ENCODE measurements at regions of chr11 and their contacts with region 1.

Region 1: GRCh38 chr11:33687733-33688479 is 12.7 kb downstream of the C11orf91 start:
- DNase-seq: peak in 1 of 2 donors; percentile 70
- ATAC-seq: no peak
- H3K4me3 ChIP-seq: no peak overlapping the region
- H3K27ac ChIP-seq: peak overlapping the region in 2 of 10 donors; percentile 84 to 94
- H3K4me1 ChIP-seq: peaks cover 16 to 52% (median 38%) of the 10 kb centered on the region in 9 donors
- H3K27me3 ChIP-seq: no peaks in the 10 kb centered on the region
- CTCF ChIP-seq: peak; percentile 66 to 85 (median 76)

Region 2: DNA sequence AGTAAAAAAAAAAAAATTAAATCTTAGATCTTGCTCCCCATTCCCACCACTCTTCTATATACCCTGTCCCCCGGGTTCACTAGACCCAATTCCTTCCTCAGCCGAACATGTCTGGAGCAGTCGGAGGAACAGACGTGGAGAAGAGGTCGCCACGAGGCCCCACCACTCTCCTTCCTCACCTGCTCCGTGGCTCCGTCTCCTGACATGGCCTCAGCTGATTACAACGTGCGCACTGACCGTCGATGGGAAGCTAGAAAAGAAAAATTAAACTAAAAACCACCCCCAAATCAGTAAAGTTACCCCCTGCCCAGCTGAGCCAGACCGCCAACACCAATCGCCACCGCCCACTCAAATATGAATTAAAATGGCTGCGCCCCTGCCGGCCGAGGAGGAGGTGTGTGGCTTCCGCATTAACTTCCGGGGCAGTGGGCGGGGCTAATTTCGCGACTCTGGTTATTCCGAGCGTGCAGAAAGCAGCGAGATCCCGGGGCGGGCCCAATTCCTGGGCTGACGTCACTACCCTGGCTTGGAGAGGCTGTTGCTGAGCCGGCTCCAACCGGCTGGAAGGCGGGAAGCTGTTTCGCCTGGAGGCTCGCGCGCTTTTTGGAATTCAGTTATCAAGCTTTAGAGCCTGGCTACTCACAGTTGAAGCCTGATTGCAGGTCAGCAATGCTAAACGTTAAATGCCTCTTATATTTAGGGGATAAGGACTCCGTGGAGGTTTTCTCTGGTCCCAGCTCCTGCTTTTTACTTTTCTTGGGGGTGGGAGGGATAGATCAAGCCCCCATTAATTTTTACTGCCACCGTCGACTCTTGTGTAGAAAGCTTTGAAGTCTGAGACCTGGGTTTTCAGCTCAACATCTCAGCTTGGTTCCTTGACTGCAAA is 526.5 kb before region 1 on chr11 and contains the start of gene CSTF3:
- intact Hi-C with region 1: loop called in 9 of 10 experiments (anchors 5 to 10 kb)
- DNase-seq: peak; percentile 100
- ATAC-seq: peak; percentile 98 to 100 (median 100)
- H3K4me3 ChIP-seq: peak within 1 kb of the TSS; percentile 42 to 83 (median 74)
- H3K27ac ChIP-seq: peak within 1 kb of the TSS in 9 of 10 donors; percentile 34 to 89 (median 78)
- H3K4me1 ChIP-seq: peaks cover 0 to 48% (median 36%) of the 10 kb centered on the region in 9 donors
- H3K27me3 ChIP-seq: no peaks in the 10 kb centered on the region
- CTCF ChIP-seq: peak; percentile 48 to 71 (median 62)
- total RNA-seq, gene CSTF3: 8.6 to 16.0 (median 12.7) TPM

Region 3: GRCh38 chr11:33542921-33543320 is 145.0 kb before region 1 on chr11:
- intact Hi-C with region 1: loop called (anchors 2 to 10 kb)
- DNase-seq: peak; percentile 38 to 46
- ATAC-seq: peak in 2 of 8 donors; percentile 38 to 68
- H3K4me3 ChIP-seq: no peak overlapping the region
- H3K27ac ChIP-seq: no peak overlapping the region
- H3K4me1 ChIP-seq: peaks cover 0 to 17% (median 0%) of the 10 kb centered on the region in 9 donors
- H3K27me3 ChIP-seq: no peaks in the 10 kb centered on the region
- CTCF ChIP-seq: peak; percentile 25 to 73 (median 61)

Region 4: DNA sequence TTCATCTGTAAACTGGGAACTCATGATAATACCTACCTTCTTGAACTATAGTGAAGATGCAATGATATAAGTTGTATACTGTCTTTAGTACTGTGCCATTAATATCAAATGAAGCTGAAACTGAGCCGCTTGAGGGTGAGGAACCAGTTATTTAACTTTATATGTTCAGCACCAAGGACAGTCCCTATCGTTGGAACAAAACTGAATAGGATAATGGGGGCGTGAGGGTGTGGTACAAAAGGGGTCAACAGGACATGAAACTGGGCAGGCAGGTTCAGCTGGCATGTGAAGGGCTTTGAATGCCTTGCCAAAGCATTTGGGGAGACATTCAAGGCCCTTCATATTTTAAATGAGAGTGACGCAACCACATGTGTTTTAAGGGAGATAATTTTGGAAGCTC is 99.8 kb before region 1 on chr11:
- intact Hi-C with region 1: no loop called
- DNase-seq: no peak
- ATAC-seq: no peak
- H3K4me3 ChIP-seq: no peak overlapping the region
- H3K27ac ChIP-seq: no peak overlapping the region
- H3K4me1 ChIP-seq: no peaks in the 10 kb centered on the region
- H3K27me3 ChIP-seq: peaks cover 0 to 15% (median 0%) of the 10 kb centered on the region in 7 donors
- CTCF ChIP-seq: no peak

Region 5: GRCh38 chr11:33742249-33742851 is 54.4 kb after region 1 on chr11:
- intact Hi-C with region 1: loop called in 3 of 10 experiments (anchors 5 kb)
- DNase-seq: no peak
- ATAC-seq: peak in 7 of 8 donors; percentile 13 to 60 (median 46)
- H3K4me3 ChIP-seq: no peak overlapping the region
- H3K27ac ChIP-seq: peak overlapping the region in 4 of 10 donors; percentile 4 to 29 (median 26)
- H3K4me1 ChIP-seq: peaks cover 0 to 43% (median 11%) of the 10 kb centered on the region in 9 donors
- H3K27me3 ChIP-seq: no peaks in the 10 kb centered on the region
- CTCF ChIP-seq: peak; percentile 34 to 77 (median 67)

Measured in heart right ventricle (tissue), 16 donors.